ENCODE measurements at regions of chr11 and their contacts with region 1.

Region 1: GRCh38 chr11:15208378-15209222 is 93.9 kb downstream of the INSC start:
- DNase-seq: peak; percentile 62 to 84 (median 83)
- ATAC-seq: peak; percentile 85 to 92
- H3K4me3 ChIP-seq: no peak overlapping the region
- H3K27ac ChIP-seq: no peak overlapping the region
- H3K4me1 ChIP-seq: no peaks in the 10 kb centered on the region
- H3K27me3 ChIP-seq: no peaks in the 10 kb centered on the region

Region 2: DNA sequence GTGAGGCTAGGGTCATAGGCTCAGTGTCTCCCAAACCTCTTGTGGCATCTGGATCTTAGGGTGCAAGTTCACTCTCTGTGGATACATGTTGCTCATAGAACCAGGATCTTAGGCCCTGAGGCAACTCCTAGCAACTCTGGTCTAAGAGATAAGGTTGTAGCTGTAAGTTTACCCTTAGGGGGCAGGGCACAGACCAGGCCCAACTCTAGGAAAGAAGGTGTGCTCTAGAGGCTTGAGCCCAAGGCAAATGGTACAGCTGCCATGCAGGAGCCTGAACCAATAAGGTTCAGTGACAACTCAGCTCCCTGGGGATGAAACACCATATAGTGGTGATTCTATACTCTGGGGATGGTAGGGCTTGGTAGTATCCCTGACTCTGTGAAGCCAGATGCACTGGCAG is 117.4 kb before region 1 on chr11:
- intact Hi-C with region 1: no loop called
- DNase-seq: no peak
- ATAC-seq: no peak
- H3K4me3 ChIP-seq: no peak overlapping the region
- H3K27ac ChIP-seq: no peak overlapping the region
- H3K4me1 ChIP-seq: no peaks in the 10 kb centered on the region
- H3K27me3 ChIP-seq: no peaks in the 10 kb centered on the region

Region 3: GRCh38 chr11:15101072-15101709 is 107.4 kb before region 1 on chr11:
- intact Hi-C with region 1: loop called (anchors 1 to 2 kb)
- DNase-seq: peak; percentile 53 to 78 (median 70)
- ATAC-seq: peak; percentile 80 to 84
- H3K4me3 ChIP-seq: no peak overlapping the region
- H3K27ac ChIP-seq: no peak overlapping the region
- H3K4me1 ChIP-seq: no peaks in the 10 kb centered on the region
- H3K27me3 ChIP-seq: peaks cover 2% of the 10 kb centered on the region

Measured in right cardiac atrium (tissue), 5 donors.